PC-3 (cell line): ENCODE measurements at regions of chr19 and their contacts with region 1.

Region 1: GRCh38 chr19:49808711-49809159 is 4.4 kb downstream of the FUZ start:
- DNase-seq: peak; percentile 79
- ATAC-seq: peak; percentile 56
- H3K4me3 ChIP-seq: peak overlapping the region; percentile 77
- H3K27ac ChIP-seq: no peak overlapping the region
- H3K4me1 ChIP-seq: peaks cover 15% of the 10 kb centered on the region
- H3K27me3 ChIP-seq: no peaks in the 10 kb centered on the region
- CTCF ChIP-seq: no peak

Region 2: DNA sequence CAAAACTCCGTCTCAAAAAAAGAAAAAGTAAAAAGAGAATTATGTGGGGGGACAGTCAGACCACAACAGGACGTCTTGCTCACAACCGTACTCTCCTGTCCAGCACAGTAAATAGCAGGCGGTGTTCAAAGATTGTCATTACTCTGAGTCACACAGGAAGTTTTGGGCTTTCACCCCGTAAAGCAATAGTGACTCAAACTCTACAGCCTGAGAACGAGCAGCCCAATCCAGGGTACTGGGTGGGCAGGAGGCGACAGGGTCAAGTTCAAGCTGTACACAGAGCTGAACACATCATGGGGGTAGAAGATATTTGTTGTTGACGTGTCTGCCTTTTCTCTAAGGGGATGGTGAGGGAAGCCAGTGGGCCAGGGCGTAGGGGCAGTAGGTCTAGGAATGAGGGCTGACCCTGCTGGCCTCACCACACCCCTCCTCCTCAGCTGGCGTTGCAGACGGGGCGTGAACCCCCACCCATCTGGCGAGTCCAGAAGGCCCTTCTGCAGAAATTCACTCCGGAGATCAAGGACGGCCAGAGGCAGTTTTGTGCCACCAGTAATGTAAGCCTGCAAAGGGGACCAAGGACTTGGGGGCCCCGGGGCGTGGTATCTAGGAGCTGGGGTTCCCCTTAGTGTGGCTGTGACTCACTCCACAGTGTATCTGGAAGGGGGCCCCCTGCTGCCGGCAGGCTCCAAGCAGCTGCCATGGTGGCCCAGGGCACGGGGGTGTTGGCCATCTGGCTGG is 194.5 kb before region 1 on chr19:
- CTCF ChIA-PET with region 1: interaction called, 11 read pairs
- POLR2A ChIA-PET with region 1: no interaction called
- intact Hi-C with region 1: no loop called
- DNase-seq: peak; percentile 97
- ATAC-seq: peak; percentile 92
- H3K4me3 ChIP-seq: peak overlapping the region; percentile 39
- H3K27ac ChIP-seq: peak overlapping the region; percentile 92
- H3K4me1 ChIP-seq: peaks cover 29% of the 10 kb centered on the region
- H3K27me3 ChIP-seq: no peaks in the 10 kb centered on the region
- CTCF ChIP-seq: peak; percentile 45; the same call in 1 of the 2 replicates

Region 3: DNA sequence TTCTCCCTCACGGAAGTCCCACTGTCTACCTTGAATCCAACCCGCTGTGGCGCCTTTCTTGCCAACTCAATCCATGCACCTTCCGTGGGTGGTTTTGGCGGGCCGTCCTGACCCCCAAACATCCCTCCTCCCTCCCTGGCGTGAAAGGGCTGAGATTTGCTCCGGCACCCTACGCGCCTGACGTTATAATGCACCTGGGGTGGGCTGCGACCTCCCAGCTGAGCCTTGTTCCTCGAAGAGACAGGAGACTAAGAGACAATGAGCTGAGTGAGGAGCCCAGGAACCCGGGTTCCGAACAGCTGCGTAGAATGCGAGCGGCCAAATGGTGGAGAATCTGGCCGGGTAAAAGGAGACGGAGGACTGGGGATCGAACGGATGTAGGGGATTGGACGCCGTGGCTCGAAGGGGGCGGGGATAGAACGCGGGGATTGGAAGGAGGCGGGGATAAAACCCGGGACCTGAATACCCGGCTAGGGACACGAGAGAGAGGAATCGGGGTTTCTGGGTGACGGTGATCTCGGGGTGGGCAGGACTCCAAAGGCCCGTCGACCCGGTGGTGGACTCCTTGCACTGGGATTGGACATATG is 118.0 kb before region 1 on chr19 and contains the start of gene CPT1C:
- CTCF ChIA-PET with region 1: no interaction called
- POLR2A ChIA-PET with region 1: no interaction called
- intact Hi-C with region 1: loop called (anchors 5 kb)
- DNase-seq: peak; percentile 90
- ATAC-seq: peak; percentile 73
- H3K4me3 ChIP-seq: peak within 1 kb of the TSS; percentile 82
- H3K27ac ChIP-seq: no peak within 1 kb of the TSS
- H3K4me1 ChIP-seq: peaks cover 19% of the 10 kb centered on the region
- H3K27me3 ChIP-seq: no peaks in the 10 kb centered on the region
- CTCF ChIP-seq: no peak
- total RNA-seq, gene CPT1C: 11.5 and 13.6 TPM in 2 replicates